CD4-positive, alpha-beta T cell (primary cell): ENCODE measurements at regions of chr5 and their contacts with region 1.

Region 1: GRCh38 chr5:71475788-71476384 is 20.4 kb downstream of the BDP1 start:
- DNase-seq: peak in 3 of 14 experiments; percentile 20 to 24 (median 24)
- ATAC-seq: peak; percentile 49
- H3K4me3 ChIP-seq: no peak overlapping the region
- H3K4me3 Mint-ChIP-seq: no peak overlapping the region
- H3K27ac ChIP-seq: no peak overlapping the region
- H3K27ac Mint-ChIP-seq: no peak overlapping the region
- H3K4me1 ChIP-seq: no peaks in the 10 kb centered on the region
- H3K4me1 Mint-ChIP-seq: peaks cover 4% of the 10 kb centered on the region
- H3K27me3 ChIP-seq: no peaks in the 10 kb centered on the region
- H3K27me3 Mint-ChIP-seq: no peaks in the 10 kb centered on the region
- CTCF ChIP-seq: peak; percentile 51

Region 2: GRCh38 chr5:71601222-71602041 is 125.5 kb after region 1 on chr5:
- CTCF ChIA-PET with region 1: interaction called, 6 read pairs
- POLR2A ChIA-PET with region 1: no interaction called
- intact Hi-C with region 1: loop called in 1 of 2 experiments (anchors 1 kb)
- DNase-seq: peak; percentile 24 to 85 (median 66)
- ATAC-seq: peak; percentile 85
- H3K4me3 ChIP-seq: no peak overlapping the region
- H3K4me3 Mint-ChIP-seq: no peak overlapping the region
- H3K27ac ChIP-seq: peak overlapping the region; percentile 26 to 67
- H3K27ac Mint-ChIP-seq: peak overlapping the region; percentile 71
- H3K4me1 ChIP-seq: peaks cover 19% of the 10 kb centered on the region
- H3K4me1 Mint-ChIP-seq: peaks cover 24% of the 10 kb centered on the region
- H3K27me3 ChIP-seq: no peaks in the 10 kb centered on the region
- H3K27me3 Mint-ChIP-seq: no peaks in the 10 kb centered on the region
- CTCF ChIP-seq: peak; percentile 75

Region 3: GRCh38 chr5:71757590-71758543 is 282.0 kb after region 1 on chr5:
- CTCF ChIA-PET with region 1: no interaction called
- POLR2A ChIA-PET with region 1: no interaction called
- intact Hi-C with region 1: loop called (anchors 10 kb)
- DNase-seq: peak in 11 of 14 experiments; percentile 10 to 61 (median 34)
- ATAC-seq: peak; percentile 63
- H3K4me3 ChIP-seq: no peak overlapping the region
- H3K4me3 Mint-ChIP-seq: no peak overlapping the region
- H3K27ac ChIP-seq: no peak overlapping the region
- H3K27ac Mint-ChIP-seq: no peak overlapping the region
- H3K4me1 ChIP-seq: no peaks in the 10 kb centered on the region
- H3K4me1 Mint-ChIP-seq: no peaks in the 10 kb centered on the region
- H3K27me3 ChIP-seq: no peaks in the 10 kb centered on the region
- H3K27me3 Mint-ChIP-seq: no peaks in the 10 kb centered on the region
- CTCF ChIP-seq: no peak

Region 4: GRCh38 chr5:72205431-72206009 is 729.6 kb after region 1 on chr5:
- CTCF ChIA-PET with region 1: no interaction called
- POLR2A ChIA-PET with region 1: no interaction called
- intact Hi-C with region 1: no loop called
- DNase-seq: no peak
- ATAC-seq: no peak
- H3K4me3 ChIP-seq: no peak overlapping the region
- H3K4me3 Mint-ChIP-seq: no peak overlapping the region
- H3K27ac ChIP-seq: no peak overlapping the region
- H3K27ac Mint-ChIP-seq: no peak overlapping the region
- H3K4me1 ChIP-seq: no peaks in the 10 kb centered on the region
- H3K4me1 Mint-ChIP-seq: no peaks in the 10 kb centered on the region
- H3K27me3 ChIP-seq: no peaks in the 10 kb centered on the region
- H3K27me3 Mint-ChIP-seq: no peaks in the 10 kb centered on the region
- CTCF ChIP-seq: no peak